ENCODE measurements at regions of chr22 and their contacts with region 1.

Region 1: DNA sequence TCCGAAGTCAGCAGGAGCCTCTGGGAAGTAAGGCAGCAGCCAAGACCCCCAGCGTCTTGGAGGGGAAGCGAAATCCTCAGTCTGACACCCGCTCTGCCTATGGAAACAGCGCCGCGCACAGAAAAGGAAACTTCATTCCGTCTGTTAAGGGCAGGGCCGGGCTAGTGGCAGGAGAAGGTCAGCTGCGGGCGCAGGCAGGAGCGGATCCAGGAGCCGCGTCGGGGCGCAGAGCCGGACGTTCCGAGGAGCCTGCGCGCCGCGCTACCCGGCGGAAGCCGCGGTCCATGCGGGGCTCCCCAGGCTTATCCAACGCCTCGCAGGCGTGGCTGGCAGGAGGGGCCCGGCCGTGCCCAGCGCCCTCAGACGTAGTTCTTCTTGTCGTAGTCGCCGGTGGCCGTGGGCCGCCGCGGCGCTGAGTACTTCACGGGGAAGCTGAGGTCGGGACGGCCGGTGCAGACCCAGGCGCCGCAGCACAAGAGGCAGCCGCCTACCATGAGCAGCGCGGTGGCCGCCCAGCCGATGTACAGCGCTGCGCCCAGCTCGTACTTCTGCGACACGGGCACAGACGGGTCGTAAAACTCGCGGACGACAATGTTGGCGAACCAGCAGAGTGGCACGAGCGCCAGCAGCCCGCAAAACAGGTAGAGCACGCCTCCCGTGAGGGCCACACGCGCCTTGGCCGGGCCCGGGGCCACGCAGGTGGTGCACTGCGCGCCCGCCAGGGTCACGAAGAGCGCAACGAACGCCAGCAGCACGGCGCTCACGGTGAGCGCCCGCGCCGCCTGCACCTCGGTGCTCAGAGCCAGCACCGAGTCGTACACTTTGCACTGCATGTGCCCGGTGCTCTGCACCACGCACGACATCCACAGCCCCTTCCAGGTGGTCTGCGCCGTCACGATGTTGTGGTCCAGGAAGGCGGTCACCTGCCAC is 705 bp downstream of the CLDN5 start:
- DNase-seq: no peak
- ATAC-seq: no peak

Region 2: GRCh38 chr22:19565382-19566278 is 42.1 kb after region 1 on chr22:
- intact Hi-C with region 1: loop called (anchors 2 kb)
- DNase-seq: no peak
- ATAC-seq: no peak

Region 3: DNA sequence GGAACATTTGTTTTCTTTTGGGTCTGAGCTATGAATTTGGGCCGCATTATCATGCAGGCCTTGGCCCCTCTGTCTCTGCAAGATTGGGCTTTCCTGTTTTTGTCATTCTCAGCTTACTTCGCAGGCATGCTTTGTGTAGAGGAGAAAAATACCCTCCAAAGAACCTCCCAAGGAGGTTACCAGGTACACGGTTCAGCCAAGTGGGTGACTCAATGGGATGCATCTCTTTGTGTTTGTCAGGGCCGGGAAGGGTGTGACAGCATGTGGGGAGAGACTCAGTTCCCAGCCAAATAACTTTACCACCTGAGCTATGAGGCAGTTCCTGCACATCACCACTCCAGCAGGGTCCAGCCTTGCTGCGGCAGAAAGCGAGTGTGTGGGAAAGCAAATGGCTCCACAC is 48.5 kb after region 1 on chr22:
- intact Hi-C with region 1: loop called (anchors 1 kb)
- DNase-seq: no peak
- ATAC-seq: no peak

Region 4: GRCh38 chr22:19619144-19620009 is 95.9 kb after region 1 on chr22:
- intact Hi-C with region 1: loop called (anchors 5 kb)
- DNase-seq: no peak
- ATAC-seq: no peak

Measured in Right ventricle myocardium inferior (tissue), 1 donor.